ENCODE measurements at regions of chr6 and their contacts with region 1.

Region 1: DNA sequence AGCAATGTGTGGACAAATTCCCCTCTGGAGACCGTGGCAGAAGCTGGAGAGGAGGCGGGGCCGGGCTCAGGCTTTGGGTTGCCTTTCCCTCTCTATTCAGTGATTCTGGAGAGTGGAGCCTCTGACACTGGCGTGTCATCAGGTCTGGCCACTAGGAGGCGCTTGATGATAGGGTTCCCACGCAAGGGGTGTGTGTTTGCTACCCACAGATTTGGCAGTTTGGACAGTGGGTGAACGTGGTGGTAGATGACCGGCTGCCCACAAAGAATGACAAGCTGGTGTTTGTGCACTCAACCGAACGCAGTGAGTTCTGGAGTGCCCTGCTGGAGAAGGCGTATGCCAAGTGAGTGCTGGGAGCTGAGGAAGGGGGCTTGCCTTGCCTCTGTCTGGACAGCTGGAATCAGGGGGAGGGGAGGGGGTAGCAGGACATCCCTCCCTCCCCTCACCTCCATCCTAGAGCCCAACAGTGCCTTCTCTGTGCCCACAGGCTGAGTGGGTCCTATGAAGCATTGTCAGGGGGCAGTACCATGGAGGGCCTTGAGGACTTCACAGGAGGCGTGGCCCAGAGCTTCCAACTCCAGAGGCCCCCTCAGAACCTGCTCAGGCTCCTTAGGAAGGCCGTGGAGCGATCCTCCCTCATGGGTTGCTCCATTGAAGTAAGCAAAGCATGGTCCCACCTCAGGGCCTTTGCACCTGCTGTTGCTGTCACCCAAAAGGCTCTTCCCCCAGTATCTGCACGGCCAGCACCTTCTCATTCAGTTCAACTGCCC is 14.3 kb downstream of the CAPN11 start:
- DNase-seq: peak; percentile 30
- ATAC-seq: peak; percentile 89
- H3K4me3 ChIP-seq: no peak overlapping the region
- H3K27ac ChIP-seq: no peak overlapping the region
- H3K4me1 ChIP-seq: peaks cover 16% of the 10 kb centered on the region
- H3K27me3 ChIP-seq: no peaks in the 10 kb centered on the region; a peak in 2 of 4 replicates
- CTCF ChIP-seq: peak; percentile 92 to 98 (median 98); a peak in 5 of 6 replicates
- EP300 ChIP-seq: no peak
- POLR2A ChIP-seq: no peak
- RAD21 ChIP-seq: peak; percentile 98

Region 2: DNA sequence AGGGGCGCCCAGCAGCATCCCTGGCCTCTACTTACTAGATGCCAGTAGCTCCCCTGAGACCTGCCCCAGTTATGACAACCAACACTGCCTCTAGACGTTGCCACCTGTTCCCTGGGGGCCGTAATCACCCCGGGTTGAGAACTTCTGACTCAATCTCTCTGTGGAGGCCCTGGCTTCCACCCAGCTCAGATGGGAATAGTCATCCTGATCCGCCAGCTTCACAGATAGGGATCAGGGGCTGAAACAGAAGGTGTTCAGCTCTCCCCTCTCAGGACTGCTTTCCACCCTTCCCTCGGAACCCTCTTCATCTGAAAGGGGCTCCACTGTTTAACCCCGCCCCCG is 10.9 kb before region 1 on chr6:
- CTCF ChIA-PET with region 1: interaction called, 13 read pairs
- POLR2A ChIA-PET with region 1: interaction called, 3 read pairs
- RAD21 ChIA-PET with region 1: no interaction called
- SMC1A ChIA-PET with region 1: interaction called, 3 read pairs
- in situ Hi-C with region 1: no loop called
- intact Hi-C with region 1: no loop called
- DNase-seq: no peak
- ATAC-seq: peak; percentile 36
- H3K4me3 ChIP-seq: no peak overlapping the region
- H3K27ac ChIP-seq: no peak overlapping the region
- H3K4me1 ChIP-seq: no peaks in the 10 kb centered on the region
- H3K27me3 ChIP-seq: peaks cover 0 to 4% of the 10 kb centered on the region in 2 experiments; a peak in 1 of 4 replicates
- CTCF ChIP-seq: no peak
- EP300 ChIP-seq: no peak
- POLR2A ChIP-seq: no peak
- RAD21 ChIP-seq: no peak

Region 3: DNA sequence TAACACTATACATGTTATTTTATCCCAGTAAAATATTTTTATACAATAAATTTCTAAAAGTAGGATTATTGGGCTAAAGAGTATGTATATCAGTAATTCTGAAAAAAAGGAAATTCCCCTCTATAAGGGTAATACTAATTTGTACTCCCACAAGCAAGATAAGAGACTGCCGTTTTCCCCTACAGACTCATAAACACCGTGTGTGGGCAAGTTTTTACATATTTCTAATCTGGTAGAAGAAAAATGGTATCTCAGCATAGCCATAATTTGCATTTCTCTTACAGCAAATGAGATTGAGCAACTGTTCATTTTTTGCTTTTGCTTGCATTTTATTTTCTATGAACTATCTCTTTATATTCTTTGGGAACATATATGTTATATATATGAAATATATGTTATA is 17.8 kb after region 1 on chr6:
- CTCF ChIA-PET with region 1: interaction called, 8 read pairs
- POLR2A ChIA-PET with region 1: interaction called, 15 read pairs
- RAD21 ChIA-PET with region 1: interaction called, 4 read pairs
- SMC1A ChIA-PET with region 1: interaction called, 9 read pairs
- in situ Hi-C with region 1: no loop called
- intact Hi-C with region 1: no loop called
- DNase-seq: peak; percentile 27
- ATAC-seq: peak; percentile 87
- H3K4me3 ChIP-seq: no peak overlapping the region
- H3K27ac ChIP-seq: no peak overlapping the region
- H3K4me1 ChIP-seq: peaks cover 12% of the 10 kb centered on the region
- H3K27me3 ChIP-seq: no peaks in the 10 kb centered on the region
- CTCF ChIP-seq: no peak
- EP300 ChIP-seq: no peak
- POLR2A ChIP-seq: no peak
- RAD21 ChIP-seq: no peak

Region 4: GRCh38 chr6:44221291-44221960 is 48.5 kb after region 1 on chr6:
- CTCF ChIA-PET with region 1: interaction called, 39 read pairs
- POLR2A ChIA-PET with region 1: interaction called, 14 read pairs
- RAD21 ChIA-PET with region 1: interaction called, 23 read pairs
- SMC1A ChIA-PET with region 1: interaction called, 9 read pairs
- in situ Hi-C with region 1: no loop called
- intact Hi-C with region 1: loop called (anchors 2 kb)
- DNase-seq: no peak
- ATAC-seq: peak; percentile 68
- H3K4me3 ChIP-seq: no peak overlapping the region
- H3K27ac ChIP-seq: peak overlapping the region; percentile 15
- H3K4me1 ChIP-seq: peaks cover 45% of the 10 kb centered on the region
- H3K27me3 ChIP-seq: no peaks in the 10 kb centered on the region
- CTCF ChIP-seq: peak; percentile 84 to 97 (median 88); a peak in 5 of 6 replicates
- EP300 ChIP-seq: 0 out of 4 replicates have a peak, but pooled peaks of 1 of the 2 experiments have one; percentile 22
- POLR2A ChIP-seq: no peak; the same call in 1 of the 2 replicates
- RAD21 ChIP-seq: peak; percentile 65

Region 5: GRCh38 chr6:44237813-44238433 is 65.0 kb after region 1 on chr6:
- CTCF ChIA-PET with region 1: interaction called, 117 read pairs
- POLR2A ChIA-PET with region 1: interaction called, 8 read pairs
- RAD21 ChIA-PET with region 1: interaction called, 29 read pairs
- SMC1A ChIA-PET with region 1: interaction called, 26 read pairs
- in situ Hi-C with region 1: loop called (anchors 5 kb)
- intact Hi-C with region 1: loop called (anchors 1 kb)
- DNase-seq: no peak
- ATAC-seq: peak; percentile 97
- H3K4me3 ChIP-seq: peak overlapping the region; percentile 54; the same call in 1 of the 2 replicates
- H3K27ac ChIP-seq: peak overlapping the region; percentile 71
- H3K4me1 ChIP-seq: peaks cover 8% of the 10 kb centered on the region
- H3K27me3 ChIP-seq: no peaks in the 10 kb centered on the region
- CTCF ChIP-seq: peak; percentile 91 to 95 (median 94)
- EP300 ChIP-seq: no peak
- POLR2A ChIP-seq: peak; percentile 83
- RAD21 ChIP-seq: peak; percentile 53

Region 6: GRCh38 chr6:44257025-44257752 is 84.3 kb after region 1 on chr6 and contains the start of gene SLC35B2:
- CTCF ChIA-PET with region 1: interaction called, 45 read pairs
- POLR2A ChIA-PET with region 1: interaction called, 4 read pairs
- RAD21 ChIA-PET with region 1: interaction called, 8 read pairs
- SMC1A ChIA-PET with region 1: interaction called, 10 read pairs
- in situ Hi-C with region 1: no loop called
- intact Hi-C with region 1: no loop called
- DNase-seq: no peak
- ATAC-seq: peak; percentile 54
- H3K4me3 ChIP-seq: peak within 1 kb of the TSS; percentile 77
- H3K27ac ChIP-seq: peak within 1 kb of the TSS; percentile 99
- H3K4me1 ChIP-seq: peaks cover 61% of the 10 kb centered on the region
- H3K27me3 ChIP-seq: no peaks in the 10 kb centered on the region
- CTCF ChIP-seq: peak; percentile 53 to 69 (median 54); a peak in 5 of 6 replicates
- EP300 ChIP-seq: no peak
- POLR2A ChIP-seq: no peak
- RAD21 ChIP-seq: peak; percentile 49
- polyA plus RNA-seq, gene SLC35B2: 11.3 to 14.9 TPM

Region 7: GRCh38 chr6:44338228-44339122 is 165.6 kb after region 1 on chr6:
- CTCF ChIA-PET with region 1: interaction called, 18 read pairs
- POLR2A ChIA-PET with region 1: no interaction called
- RAD21 ChIA-PET with region 1: interaction called, 4 read pairs
- SMC1A ChIA-PET with region 1: interaction called, 11 read pairs
- in situ Hi-C with region 1: no loop called
- intact Hi-C with region 1: loop called (anchors 1 kb)
- DNase-seq: peak; percentile 34
- ATAC-seq: peak; percentile 96
- H3K4me3 ChIP-seq: no peak overlapping the region
- H3K27ac ChIP-seq: no peak overlapping the region
- H3K4me1 ChIP-seq: no peaks in the 10 kb centered on the region
- H3K27me3 ChIP-seq: peaks cover 2 to 4% of the 10 kb centered on the region in 2 experiments; a peak in 3 of 4 replicates
- CTCF ChIP-seq: peak; percentile 71 to 92 (median 82); a peak in 5 of 6 replicates
- EP300 ChIP-seq: no peak
- POLR2A ChIP-seq: no peak
- RAD21 ChIP-seq: peak; percentile 96

Measured in GM12878 (cell line).